ENCODE measurements at regions of chr2 and their contacts with region 1.

Region 1: DNA sequence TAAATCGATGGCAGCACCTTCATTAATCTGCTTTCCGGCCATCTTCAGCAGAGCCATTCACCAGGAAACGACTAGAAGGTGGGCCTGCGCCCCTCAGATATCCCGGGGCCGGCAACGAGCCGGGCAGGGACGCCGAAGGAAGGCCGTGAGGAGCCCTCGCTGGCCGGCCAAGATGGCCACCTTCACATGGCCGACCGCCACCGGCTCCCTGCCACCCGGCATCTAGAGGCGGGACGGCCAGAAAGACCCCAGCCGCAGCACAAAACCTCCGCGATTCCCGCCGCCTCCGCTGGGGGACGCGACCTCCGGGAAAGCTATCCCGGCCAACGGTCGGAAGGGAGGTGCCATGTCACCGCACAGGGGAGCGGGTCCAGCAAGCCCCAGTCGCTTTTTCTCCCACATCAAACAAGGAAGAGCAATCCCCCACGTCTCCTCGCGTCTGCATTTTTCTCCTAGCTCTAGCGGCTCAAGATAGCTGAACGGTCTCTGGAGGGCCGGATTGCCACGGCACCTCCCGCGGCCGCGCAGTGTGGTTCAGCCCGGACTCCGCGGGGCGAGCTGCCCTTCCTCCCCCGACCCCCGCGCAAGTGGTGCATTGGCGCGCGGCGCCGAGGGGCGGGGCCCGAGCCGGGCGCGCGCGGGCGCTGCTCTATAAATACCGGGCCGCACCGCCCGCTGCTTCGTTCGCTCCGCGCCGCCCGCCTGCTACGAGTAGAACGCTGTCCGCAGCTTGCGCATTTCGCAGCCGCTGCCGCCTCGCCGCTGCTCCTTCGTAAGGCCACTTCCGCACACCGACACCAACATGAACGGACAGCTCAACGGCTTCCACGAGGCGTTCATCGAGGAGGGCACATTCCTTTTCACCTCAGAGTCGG is at the start of gene MAT2A:
- DNase-seq: peak; percentile 95
- H3K4me3 ChIP-seq: peak within 1 kb of the TSS; percentile 93
- H3K27ac ChIP-seq: peak within 1 kb of the TSS; percentile 99
- H3K4me1 ChIP-seq: peaks cover 36% of the 10 kb centered on the region
- H3K27me3 ChIP-seq: no peaks in the 10 kb centered on the region
- CTCF ChIP-seq: peak; percentile 74
- total RNA-seq, gene MAT2A: 355 and 408 TPM in 2 replicates

Region 2: DNA sequence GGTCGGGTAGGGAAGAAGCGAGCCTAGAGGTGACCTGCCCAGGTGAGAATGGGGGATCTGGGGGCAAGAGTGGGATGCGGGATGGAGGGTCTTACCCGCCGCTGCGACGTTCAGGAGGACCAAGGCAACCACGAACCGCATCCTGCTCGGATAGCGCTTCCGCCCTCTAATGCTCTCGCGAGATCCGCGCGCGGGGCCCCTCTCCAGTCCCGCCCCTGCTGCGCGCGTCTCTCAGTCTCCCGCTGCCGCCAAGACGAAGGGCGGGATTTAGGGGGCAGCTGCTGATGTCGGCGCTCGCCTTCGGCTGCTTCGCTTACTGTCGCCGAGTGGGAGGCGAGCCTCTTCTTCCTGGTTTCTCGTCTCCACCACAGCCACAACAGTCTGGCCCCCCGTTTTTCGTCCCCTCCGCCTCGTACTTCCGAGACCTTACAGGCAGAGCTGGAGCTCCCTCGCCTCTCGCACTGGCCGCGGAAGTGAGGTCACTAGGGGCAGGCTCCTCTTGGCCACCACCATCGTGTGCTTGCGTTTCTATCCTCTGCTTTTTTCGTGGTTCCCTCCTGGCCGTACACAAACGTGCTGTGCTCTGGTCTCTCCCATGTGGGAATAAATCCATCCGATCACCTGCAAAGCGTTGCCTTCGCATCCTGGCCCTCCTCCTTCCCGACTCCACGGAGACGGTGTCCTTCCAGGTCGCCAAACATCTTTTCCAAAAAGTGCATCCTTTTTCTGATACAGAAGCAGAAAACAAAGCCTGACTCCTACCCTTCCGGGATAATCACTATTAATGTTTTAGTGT is 210.7 kb before region 1 on chr2 and contains the start of gene TGOLN2:
- CTCF ChIA-PET with region 1: no interaction called
- POLR2A ChIA-PET with region 1: interaction called, 11 read pairs
- intact Hi-C with region 1: loop called (anchors 10 kb)
- DNase-seq: peak; percentile 97
- H3K4me3 ChIP-seq: peak within 1 kb of the TSS; percentile 87
- H3K27ac ChIP-seq: peak within 1 kb of the TSS; percentile 86
- H3K4me1 ChIP-seq: peaks cover 17% of the 10 kb centered on the region
- H3K27me3 ChIP-seq: no peaks in the 10 kb centered on the region
- CTCF ChIP-seq: no peak
- total RNA-seq, gene TGOLN2: 48.8 and 56.0 TPM in 2 replicates

Region 3: DNA sequence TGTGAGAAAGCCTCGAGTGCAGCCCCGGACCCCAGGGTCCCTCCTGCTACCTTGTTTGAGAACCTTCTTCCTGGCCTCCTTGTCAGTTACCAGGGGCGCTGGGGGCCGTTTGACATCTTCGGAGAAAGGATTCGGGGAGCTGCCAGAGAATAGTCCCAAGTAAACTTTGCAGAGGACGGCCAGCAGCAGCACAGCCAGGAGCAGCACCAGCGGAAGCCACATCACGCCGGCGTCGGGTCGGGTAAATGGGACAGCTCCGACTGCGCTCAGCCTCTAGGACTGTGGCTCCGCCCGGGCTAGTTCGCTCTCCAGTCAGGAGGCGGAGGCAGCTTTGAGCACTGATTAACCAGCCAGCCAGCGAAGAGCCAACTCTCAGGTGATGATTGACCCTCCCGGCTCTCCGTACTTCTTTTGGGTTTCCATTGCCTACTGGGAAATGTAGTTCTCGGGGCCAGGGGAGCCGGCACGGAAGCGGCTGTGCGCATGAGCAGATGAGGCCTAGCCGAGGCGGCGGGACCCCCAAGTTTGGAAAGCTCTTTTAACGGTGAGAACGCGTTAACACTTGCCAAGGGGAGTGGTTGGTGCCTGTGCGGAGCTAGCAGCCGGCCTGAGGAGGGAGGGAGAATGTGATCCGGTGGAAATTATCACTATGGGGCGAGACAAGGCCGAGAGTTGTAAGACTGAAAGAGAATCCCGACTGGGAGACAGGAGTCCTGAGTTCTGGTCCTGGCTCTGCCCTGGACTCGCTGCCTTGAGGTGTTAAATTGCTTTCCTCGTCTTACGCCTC is 184.2 kb before region 1 on chr2 and contains the starts of genes ELMOD3 and RETSAT:
- CTCF ChIA-PET with region 1: no interaction called
- POLR2A ChIA-PET with region 1: interaction called, 14 read pairs
- intact Hi-C with region 1: no loop called
- DNase-seq: peak; percentile 99
- H3K4me3 ChIP-seq: peak within 1 kb of the TSS; percentile 76
- H3K27ac ChIP-seq: peak within 1 kb of the TSS; percentile 83
- H3K4me1 ChIP-seq: peaks cover 5% of the 10 kb centered on the region
- H3K27me3 ChIP-seq: no peaks in the 10 kb centered on the region
- CTCF ChIP-seq: no peak
- total RNA-seq, gene ELMOD3: 13.0 and 16.4 TPM in 2 replicates
- total RNA-seq, gene RETSAT: 28.4 and 30.4 TPM in 2 replicates

Region 4: GRCh38 chr2:85369500-85369899 is 169.2 kb before region 1 on chr2:
- CTCF ChIA-PET with region 1: no interaction called
- POLR2A ChIA-PET with region 1: interaction called, 14 read pairs
- intact Hi-C with region 1: no loop called
- DNase-seq: no peak
- H3K4me3 ChIP-seq: no peak overlapping the region
- H3K27ac ChIP-seq: peak overlapping the region; percentile 25
- H3K4me1 ChIP-seq: no peaks in the 10 kb centered on the region
- H3K27me3 ChIP-seq: no peaks in the 10 kb centered on the region
- CTCF ChIP-seq: no peak

Region 5: DNA sequence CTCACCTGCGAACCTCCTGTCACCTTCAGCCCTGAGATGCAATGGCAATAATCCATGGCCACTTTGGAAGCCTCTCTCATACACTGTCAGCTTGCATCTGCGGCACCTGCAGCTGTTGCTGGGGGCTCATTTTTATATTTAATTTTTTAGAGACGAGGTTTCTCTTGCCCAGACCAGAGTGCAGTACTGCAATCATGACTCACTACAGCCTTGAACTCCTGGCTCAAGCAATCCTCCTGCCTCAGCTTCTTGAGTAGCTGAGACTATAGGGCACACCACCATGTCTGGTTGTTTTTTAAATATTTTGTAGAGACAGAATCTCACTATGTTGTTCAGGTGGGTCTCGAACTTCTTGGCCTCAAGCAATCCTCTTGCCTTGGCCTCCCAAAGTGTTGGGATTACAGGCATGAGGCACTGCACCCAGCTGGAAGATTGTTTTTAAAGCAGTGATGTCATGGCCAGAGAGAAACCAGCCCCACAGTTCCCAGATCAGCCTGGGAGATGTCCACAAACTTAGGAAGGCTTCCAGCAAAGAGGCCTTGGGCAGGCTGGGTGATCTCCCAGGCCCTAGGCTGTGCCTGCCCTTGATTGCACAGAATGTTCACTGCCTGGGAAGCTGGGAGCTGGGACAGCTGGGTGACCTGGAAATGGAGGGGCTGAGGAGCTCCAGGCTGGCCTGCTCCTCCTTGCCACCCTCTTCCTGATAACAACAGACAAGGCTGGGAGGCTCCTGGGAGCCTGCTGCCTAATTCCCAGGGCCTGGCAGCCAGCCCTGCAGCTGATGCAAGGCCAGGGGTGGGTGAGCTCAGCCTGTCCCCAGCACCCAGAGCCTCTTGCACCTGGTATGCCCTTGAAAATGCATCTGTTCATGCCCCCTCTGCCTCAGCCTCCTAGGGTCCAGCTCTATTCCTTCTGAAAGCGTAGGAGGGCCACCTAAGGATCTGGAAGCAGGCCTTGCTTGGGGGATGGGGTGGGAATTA is 93.1 kb before region 1 on chr2:
- CTCF ChIA-PET with region 1: no interaction called
- POLR2A ChIA-PET with region 1: interaction called, 17 read pairs
- intact Hi-C with region 1: no loop called
- DNase-seq: peak; percentile 51
- H3K4me3 ChIP-seq: no peak overlapping the region
- H3K27ac ChIP-seq: peak overlapping the region; percentile 86
- H3K4me1 ChIP-seq: peaks cover 23% of the 10 kb centered on the region
- H3K27me3 ChIP-seq: no peaks in the 10 kb centered on the region
- CTCF ChIP-seq: no peak

Region 6: DNA sequence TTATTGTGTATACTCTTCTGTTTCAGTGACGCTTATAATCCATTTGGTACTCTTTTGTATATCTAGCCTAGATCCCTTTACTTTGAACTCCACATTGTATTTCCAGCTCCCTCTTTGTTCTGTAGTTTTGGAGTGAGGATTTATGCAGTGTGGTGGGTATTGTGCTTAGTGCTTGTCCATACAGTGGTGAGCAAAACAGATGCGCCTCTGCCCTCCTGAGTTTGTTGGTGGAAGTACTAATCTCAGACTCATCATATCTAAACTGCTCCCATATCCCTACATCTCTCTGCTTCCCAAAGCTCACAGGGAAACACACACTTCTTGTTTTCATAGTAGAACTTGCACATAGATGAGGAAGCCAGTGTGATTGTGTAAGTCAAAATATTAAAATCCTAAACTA is 579.4 kb after region 1 on chr2:
- CTCF ChIA-PET with region 1: no interaction called
- POLR2A ChIA-PET with region 1: no interaction called
- intact Hi-C with region 1: no loop called
- DNase-seq: no peak
- H3K4me3 ChIP-seq: no peak overlapping the region
- H3K27ac ChIP-seq: no peak overlapping the region
- H3K4me1 ChIP-seq: no peaks in the 10 kb centered on the region
- H3K27me3 ChIP-seq: no peaks in the 10 kb centered on the region
- CTCF ChIP-seq: no peak